Activated CD4-positive, alpha-beta memory T cell treated with anti-CD3 and anti-CD28 coated beads for 36 hours (primary cell): ENCODE measurements at regions of chr1 and their contacts with region 1.

Region 1: DNA sequence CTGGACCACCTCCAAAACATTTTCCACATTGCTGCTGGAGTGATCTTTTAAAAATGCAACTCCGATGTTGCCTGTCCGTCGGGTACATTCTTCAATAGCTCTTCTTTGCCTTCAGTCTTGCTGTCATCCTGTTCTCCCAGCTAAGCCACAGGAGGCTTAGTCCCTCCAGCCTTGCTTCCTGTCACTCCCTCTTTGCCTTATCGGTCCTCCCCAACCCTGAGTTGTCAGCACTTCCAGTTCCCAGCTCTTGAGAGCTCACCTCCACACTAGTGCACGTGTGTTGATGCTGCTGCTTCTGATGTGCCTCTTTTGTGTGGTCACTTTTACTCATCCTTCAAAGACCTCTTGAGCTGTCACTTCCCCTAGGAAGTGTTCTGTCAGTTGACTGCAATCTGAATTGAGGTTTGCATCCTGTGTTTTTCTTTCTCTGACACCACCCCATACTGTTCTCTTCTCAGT is 15.3 kb downstream of the UCK2 start:
- DNase-seq: peak; percentile 56
- H3K4me3 Mint-ChIP-seq: no peak overlapping the region
- H3K27ac Mint-ChIP-seq: peak overlapping the region; percentile 49
- H3K4me1 Mint-ChIP-seq: peaks cover 33% of the 10 kb centered on the region
- H3K27me3 Mint-ChIP-seq: no peaks in the 10 kb centered on the region

Region 2: GRCh38 chr1:165871311-165872067 is 28.8 kb after region 1 on chr1:
- CTCF ChIA-PET with region 1: no interaction called
- POLR2A ChIA-PET with region 1: no interaction called
- intact Hi-C with region 1: loop called (anchors 2 kb)
- DNase-seq: peak; percentile 76
- H3K4me3 Mint-ChIP-seq: no peak overlapping the region
- H3K27ac Mint-ChIP-seq: peak overlapping the region; percentile 20
- H3K4me1 Mint-ChIP-seq: peaks cover 34% of the 10 kb centered on the region
- H3K27me3 Mint-ChIP-seq: no peaks in the 10 kb centered on the region